ENCODE measurements at regions of chr10 and their contacts with region 1.

Region 1: GRCh38 chr10:101367569-101368453 is 13.8 kb downstream of the BTRC start:
- DNase-seq: no peak
- ATAC-seq: peak; percentile 80
- H3K4me3 Mint-ChIP-seq: no peak overlapping the region
- H3K27ac Mint-ChIP-seq: peak overlapping the region; percentile 8
- H3K4me1 Mint-ChIP-seq: peaks cover 21% of the 10 kb centered on the region
- H3K27me3 Mint-ChIP-seq: no peaks in the 10 kb centered on the region
- CTCF ChIP-seq: no peak

Region 2: DNA sequence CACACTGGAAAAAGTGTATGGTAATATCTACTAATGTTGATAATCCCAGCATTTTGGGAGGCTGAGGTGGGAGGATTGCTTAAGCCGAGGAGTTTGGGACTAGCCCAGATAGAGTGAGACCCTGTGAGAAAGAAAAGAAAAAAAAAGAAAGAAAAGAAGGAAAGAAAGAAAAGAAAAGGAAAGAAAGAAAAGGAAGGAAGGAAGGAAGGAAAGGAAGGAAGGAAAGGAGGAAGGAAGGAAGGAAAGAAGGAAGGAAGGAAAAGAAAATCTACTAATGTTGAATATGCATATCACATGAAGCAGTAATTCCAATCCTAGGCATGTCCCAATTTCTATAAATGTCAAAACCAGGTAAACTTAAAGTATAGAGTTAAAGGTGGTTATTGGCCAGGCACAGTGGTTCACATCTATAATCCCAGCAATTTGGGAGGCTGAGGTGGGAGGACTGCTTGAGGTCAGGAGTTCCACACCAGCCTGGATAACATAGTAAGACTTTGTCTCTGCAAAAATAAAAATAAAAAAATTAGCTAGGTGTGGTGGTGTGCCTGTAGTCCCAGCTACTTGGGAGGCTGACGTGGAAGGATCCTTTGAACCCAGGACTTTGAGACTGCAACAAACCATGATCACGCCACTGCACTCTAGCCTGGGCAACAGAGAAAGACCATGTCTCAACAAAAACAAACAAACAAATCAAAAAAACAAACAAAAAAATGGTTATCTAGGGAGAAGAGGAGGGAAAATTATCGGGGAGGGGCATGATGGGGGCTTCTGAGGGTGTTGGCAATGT is 311.3 kb before region 1 on chr10:
- CTCF ChIA-PET with region 1: no interaction called
- POLR2A ChIA-PET with region 1: no interaction called
- intact Hi-C with region 1: no loop called
- DNase-seq: no peak
- ATAC-seq: no peak
- H3K4me3 Mint-ChIP-seq: no peak overlapping the region
- H3K27ac Mint-ChIP-seq: no peak overlapping the region
- H3K4me1 Mint-ChIP-seq: peaks cover 9% of the 10 kb centered on the region
- H3K27me3 Mint-ChIP-seq: no peaks in the 10 kb centered on the region
- CTCF ChIP-seq: no peak

Region 3: GRCh38 chr10:101353692-101354327 is 14.0 kb before region 1 on chr10 and contains the start of gene BTRC:
- CTCF ChIA-PET with region 1: interaction called, 11 read pairs
- POLR2A ChIA-PET with region 1: interaction called, 15 read pairs
- intact Hi-C with region 1: no loop called
- DNase-seq: peak; percentile 97
- ATAC-seq: peak; percentile 98
- H3K4me3 Mint-ChIP-seq: peak within 1 kb of the TSS; percentile 87
- H3K27ac Mint-ChIP-seq: peak within 1 kb of the TSS; percentile 95
- H3K4me1 Mint-ChIP-seq: peaks cover 28% of the 10 kb centered on the region
- H3K27me3 Mint-ChIP-seq: peaks cover 14% of the 10 kb centered on the region
- CTCF ChIP-seq: no peak
- total RNA-seq, gene BTRC: 11.6 to 14.6 TPM

Measured in activated CD8-positive, alpha-beta T cell treated with anti-CD3 and anti-CD28 coated beads for 36 hours (primary cell).